Posterior vena cava (tissue), 2 donors: ENCODE measurements at regions of chr19 and their contacts with region 1.

Region 1: DNA sequence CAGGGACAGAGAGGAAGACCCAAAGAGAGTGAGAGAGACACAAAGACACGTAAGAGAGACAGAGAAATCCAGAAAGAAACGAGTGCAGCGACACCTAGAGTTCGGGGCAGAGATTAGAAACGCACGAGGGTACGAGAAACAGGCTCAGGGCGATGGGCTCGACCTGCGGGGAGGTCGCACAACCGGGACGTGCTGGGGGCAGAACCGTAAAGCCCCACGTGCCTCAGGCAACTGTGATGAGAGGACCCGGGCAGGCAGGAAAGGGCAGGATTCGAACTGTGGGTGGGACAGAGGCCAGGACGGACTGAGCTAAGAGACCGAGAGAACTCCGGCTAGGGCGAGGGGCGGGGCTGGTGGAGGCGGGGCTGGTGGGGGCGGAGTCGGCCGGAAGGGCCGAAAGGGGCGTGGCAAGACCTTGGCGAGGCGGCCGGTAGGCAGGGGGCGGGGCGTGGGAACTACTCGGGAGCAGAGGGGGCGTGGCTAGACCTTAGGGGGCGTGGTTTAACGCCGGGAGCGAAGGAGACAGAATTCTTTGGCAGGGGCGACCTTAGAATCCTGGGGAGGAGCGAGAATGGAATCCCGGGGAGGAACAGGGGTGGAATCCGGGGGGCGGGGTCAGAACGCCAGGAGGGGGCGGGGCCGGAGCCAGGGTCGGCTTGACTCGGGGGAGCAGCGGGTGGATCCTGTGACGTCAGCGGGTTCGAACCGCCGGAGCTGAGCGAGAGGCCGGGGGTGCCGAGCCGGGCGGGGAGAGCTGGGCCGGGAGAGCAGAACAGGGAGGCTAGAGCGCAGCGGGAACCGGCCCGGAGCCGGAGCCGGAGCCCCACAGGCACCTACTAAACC is at the start of gene NECTIN2:
- DNase-seq: peak; percentile 100
- total RNA-seq, gene NECTIN2: 48.9 to 59.8 TPM

Region 2: DNA sequence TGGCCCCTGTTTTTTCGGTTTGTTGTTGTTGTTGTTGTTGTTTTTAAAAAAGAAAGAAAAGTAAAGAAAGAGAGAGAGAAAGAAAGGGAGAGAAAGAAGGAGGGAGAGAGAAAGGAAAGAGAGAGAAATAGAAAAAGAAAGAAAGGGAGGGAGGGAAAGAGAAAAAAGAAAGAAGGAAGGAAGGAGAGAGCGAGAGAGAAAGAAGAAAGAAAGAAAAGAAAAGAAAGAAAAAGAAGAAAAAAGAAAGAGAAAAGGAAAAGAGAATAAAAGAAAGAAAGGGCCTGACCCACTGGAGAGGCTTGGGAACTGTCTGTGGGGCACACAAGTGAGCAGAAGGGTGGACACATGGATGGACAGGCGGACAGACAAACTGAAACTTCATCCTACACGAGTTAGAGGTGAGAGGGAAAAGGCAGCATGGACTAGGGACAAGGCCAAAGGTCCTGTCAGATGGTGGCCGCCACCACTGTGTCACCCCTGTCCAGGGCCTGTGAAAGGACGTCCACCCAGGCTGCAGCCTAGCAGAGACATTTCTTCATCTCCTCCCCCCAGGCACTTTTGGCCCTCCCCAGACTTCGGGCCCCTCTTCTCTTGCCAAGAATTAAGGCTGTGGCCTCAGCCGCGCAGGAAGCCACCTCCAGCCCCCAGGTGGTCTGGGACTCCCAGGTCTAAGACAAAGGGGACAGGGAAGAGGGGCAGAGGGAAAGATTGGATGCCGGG is 46.0 kb before region 1 on chr19:
- intact Hi-C with region 1: loop called in 1 of 2 experiments (anchors 2 kb)
- DNase-seq: no peak

Region 3: DNA sequence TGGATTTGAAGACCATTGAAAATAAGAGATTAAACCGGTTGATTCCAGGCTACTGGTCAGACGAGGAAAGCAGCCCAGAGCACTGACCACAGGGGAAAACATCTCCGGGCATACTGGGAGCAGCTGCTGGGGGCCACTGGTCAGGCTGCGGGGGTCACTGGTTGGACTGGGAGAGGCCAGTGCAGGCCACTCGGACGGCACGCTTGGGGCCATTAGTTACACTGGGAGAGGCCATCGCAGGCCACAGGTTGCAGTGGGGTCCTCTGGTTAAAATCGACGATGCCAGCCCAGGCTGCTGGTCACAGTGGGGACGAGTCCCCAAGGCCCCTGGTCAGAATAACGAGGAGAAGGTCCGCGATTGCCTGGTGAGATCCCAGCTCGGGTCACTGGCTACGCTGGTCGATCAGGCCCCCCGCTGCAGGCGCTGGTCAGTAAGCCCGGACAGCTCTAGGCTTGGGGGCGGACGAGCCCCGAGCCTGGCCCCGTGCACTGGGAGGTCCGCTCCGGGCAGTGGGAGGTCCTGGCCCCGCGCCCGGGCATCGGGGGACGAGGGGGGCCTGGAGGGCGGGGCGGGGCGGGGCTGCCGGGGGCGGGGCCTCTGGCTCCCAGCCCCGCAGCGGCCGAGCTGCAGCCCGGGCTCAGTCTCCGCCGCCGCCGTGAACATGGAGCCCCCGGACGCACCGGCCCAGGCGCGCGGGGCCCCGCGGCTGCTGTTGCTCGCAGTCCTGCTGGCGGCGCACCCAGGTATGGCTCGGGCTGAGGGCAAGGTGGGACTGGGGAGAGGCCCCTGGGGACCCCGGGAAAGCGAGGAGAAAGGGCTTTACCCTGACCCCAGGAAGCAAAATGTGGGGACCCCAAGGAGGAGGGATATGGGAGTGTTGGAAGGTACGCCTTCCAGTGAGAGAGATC is 37.1 kb before region 1 on chr19 and contains the start of gene BCAM:
- intact Hi-C with region 1: loop called in 1 of 2 experiments (anchors 5 kb)
- DNase-seq: peak; percentile 87
- total RNA-seq, gene BCAM: 49.6 to 53.8 TPM

Region 4: DNA sequence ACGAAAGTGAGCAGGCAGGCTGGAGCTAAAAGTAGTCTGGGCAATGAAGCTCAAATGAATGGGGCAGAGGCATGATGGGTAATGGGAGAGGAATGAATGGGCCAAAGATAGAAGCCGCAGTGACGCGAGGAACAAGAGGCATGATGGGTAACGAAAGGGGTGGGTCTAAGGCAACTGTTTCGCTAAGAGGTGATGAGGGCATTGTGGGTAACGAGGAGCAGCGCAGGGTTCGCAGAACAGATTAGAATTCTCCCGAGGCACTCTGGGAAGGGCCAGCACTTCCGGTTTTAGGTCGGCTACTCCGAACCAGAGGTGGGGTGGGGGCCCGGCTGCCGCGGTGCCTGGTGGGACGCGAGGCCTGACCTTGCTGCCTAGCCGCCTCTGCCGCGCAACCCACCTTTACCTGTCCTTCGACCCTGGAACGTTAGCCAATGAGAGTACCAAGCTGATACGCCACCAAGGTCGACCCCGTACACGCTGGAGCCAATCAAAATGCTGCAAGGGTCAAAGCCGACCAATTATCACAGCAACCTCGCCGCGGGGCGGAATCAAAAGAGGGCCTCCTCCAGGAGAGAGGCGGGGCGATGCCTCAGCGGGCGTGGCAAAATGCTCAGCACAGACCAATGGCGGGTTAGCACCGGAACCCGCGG is 44.7 kb after region 1 on chr19:
- intact Hi-C with region 1: loop called in 1 of 2 experiments (anchors 5 kb)
- DNase-seq: no peak